Sigmoid colon (tissue), 7 donors: ENCODE measurements at regions of chr11 and their contacts with region 1.

Region 1: DNA sequence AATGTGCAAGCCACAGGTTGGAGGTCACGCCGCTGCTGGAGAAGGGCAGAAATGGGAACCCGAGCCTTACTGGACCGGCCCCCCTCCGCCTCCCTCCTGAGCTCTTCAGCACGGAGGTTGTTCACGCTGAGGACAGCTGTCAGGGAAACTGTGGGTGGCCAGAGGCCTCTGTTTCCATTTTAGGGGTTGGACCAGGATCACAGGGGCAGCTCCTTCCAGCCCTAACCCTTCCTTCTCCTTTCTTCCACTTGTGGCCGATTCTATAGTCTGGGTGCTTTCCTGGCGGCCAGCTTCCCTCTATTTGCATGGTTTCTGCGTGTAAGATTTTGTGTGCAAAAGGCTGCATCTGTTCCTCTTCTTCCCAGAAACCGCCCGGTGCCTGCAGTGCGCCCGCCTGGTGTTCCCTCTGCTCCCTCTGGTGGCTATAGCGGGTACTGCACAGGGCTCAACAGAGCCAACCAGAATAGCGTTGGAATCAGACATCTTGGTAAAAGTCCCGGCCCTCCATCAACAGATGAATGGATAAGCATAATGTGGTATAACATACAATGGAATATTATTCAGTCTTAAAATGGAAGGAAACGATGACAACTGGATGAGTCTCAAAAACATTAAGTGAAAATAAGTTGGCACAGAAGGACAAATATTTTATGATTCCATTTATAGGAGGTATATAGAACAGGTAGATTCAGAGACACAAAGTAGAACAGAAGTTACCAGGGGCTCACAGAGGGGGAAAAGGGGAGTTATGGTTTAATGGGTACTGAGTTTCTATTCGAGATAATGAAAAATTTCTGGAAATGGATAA is 8.4 kb upstream of the SLC22A8 start:
- DNase-seq: peak; percentile 91
- H3K4me3 ChIP-seq: no peak overlapping the region
- H3K27ac ChIP-seq: no peak overlapping the region
- H3K4me1 ChIP-seq: peaks cover 0 to 8% (median 3%) of the 10 kb centered on the region in 4 donors
- H3K27me3 ChIP-seq: peaks cover 0 to 3% (median 0%) of the 10 kb centered on the region in 3 donors
- CTCF ChIP-seq: peak; percentile 97 to 100 (median 99)
- EP300 ChIP-seq: no peak
- POLR2A ChIP-seq: no peak

Region 2: DNA sequence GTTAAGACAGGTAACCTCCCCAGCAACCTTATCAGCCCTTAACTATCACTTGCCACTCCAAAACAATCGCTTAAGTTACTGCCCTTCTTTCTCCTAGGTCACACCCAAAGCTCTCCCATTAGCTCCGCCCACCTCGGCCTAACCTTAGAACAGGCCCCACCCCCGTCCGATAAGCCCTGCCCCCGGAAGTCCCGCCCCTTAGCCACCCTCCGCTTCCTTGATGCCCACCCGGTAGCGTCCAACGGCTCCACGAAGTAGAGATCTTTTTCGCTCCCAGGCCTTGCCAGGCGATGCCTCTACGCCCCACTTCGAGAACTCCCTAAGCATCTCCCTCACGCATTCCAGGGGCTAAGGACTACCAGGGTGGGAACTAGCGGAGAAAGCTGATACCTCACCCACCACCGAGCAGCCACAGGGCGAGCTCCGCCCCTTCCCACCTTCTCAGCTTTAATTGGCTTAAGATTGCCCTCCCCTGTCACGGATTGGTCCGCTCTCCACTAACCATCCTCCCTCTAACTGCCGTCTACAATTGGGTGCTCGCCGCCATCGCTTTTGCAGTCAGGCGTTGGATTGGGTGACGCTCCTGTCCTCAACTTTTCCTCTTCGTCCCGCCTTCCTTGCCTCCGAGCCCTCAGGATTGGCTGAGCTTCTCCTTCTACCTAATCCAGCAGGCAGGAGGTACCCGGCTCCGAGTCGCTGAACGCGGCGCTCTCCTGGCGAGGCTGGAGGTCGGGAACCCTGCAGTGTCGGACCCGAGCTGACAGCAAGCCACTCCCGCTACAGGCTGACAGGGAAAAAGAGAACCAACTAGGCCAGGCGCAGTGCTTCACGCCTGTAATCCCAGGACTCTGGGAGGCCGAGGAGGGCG is 270.1 kb before region 1 on chr11 and contains the start of gene ZBTB3:
- intact Hi-C with region 1: no loop called
- DNase-seq: peak; percentile 99
- H3K4me3 ChIP-seq: peak within 1 kb of the TSS; percentile 50 to 70 (median 66)
- H3K27ac ChIP-seq: peak within 1 kb of the TSS; percentile 90 to 96 (median 94)
- H3K4me1 ChIP-seq: peaks cover 0 to 38% (median 18%) of the 10 kb centered on the region in 4 donors
- H3K27me3 ChIP-seq: no peaks in the 10 kb centered on the region
- CTCF ChIP-seq: peak in 1 of 4 experiments; percentile 9
- EP300 ChIP-seq: no peak
- POLR2A ChIP-seq: peak; percentile 76 to 87
- total RNA-seq, gene ZBTB3: 6.6 to 12.1 (median 7.7) TPM

Region 3: GRCh38 chr11:62905927-62906531 is 118.0 kb before region 1 on chr11:
- intact Hi-C with region 1: loop called (anchors 1 kb)
- DNase-seq: peak; percentile 89
- H3K4me3 ChIP-seq: no peak overlapping the region
- H3K27ac ChIP-seq: peak overlapping the region in 1 of 4 donors; percentile 42
- H3K4me1 ChIP-seq: peaks cover 0 to 11% (median 4%) of the 10 kb centered on the region in 4 donors
- H3K27me3 ChIP-seq: no peaks in the 10 kb centered on the region
- CTCF ChIP-seq: peak; percentile 95 to 99 (median 98)
- EP300 ChIP-seq: no peak
- POLR2A ChIP-seq: no peak